Activated CD4-positive, alpha-beta memory T cell treated with anti-CD3 and anti-CD28 coated beads for 36 hours (primary cell): ENCODE measurements at regions of chr6 and their contacts with region 1.

Region 1: DNA sequence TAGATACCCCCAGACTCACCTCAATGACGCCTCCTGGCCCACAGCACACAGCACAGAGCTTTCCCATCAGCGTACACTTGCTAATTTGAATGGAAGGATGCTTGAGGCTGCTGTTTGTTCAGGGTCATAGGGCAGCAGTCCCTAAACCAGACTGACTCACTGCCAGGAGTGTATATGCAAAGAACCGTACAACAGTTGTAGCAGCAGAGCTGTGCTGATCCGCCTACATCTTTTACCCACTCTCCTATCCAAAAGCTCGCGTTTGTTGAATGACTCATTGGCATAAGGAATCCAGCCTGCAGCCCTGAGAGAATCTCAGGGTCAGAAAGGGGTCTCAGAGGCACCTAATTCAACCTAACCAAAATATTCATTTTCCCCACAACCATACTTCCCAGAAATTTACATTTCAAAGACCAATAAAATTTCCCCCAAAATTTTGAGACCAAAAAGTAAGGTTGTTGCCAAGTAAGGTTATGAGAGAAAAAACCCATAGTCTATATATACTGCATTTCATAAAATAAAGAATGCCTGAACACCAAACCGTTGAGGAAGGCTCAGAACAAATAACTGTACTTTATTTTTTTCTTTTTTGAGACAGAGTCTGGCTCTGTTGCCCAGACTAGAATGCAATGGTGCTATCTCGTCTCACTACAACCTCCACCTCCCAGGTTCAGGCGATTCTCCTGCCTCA is 35.3 kb upstream of the CCND3 start:
- DNase-seq: peak; percentile 64
- H3K4me3 Mint-ChIP-seq: peak overlapping the region; percentile 57
- H3K27ac Mint-ChIP-seq: peak overlapping the region; percentile 94
- H3K4me1 Mint-ChIP-seq: peaks cover 67% of the 10 kb centered on the region
- H3K27me3 Mint-ChIP-seq: no peaks in the 10 kb centered on the region

Region 2: GRCh38 chr6:41638002-41638934 is 338.7 kb before region 1 on chr6 and contains the start of gene MDFI:
- CTCF ChIA-PET with region 1: no interaction called
- POLR2A ChIA-PET with region 1: no interaction called
- intact Hi-C with region 1: no loop called
- DNase-seq: no peak
- H3K4me3 Mint-ChIP-seq: peak within 1 kb of the TSS; percentile 54
- H3K27ac Mint-ChIP-seq: no peak within 1 kb of the TSS
- H3K4me1 Mint-ChIP-seq: peaks cover 5% of the 10 kb centered on the region
- H3K27me3 Mint-ChIP-seq: peaks cover 48% of the 10 kb centered on the region
- total RNA-seq, gene MDFI: not detected

Region 3: GRCh38 chr6:41901882-41902519 is 74.9 kb before region 1 on chr6:
- CTCF ChIA-PET with region 1: no interaction called
- POLR2A ChIA-PET with region 1: no interaction called
- intact Hi-C with region 1: no loop called
- DNase-seq: peak; percentile 75
- H3K4me3 Mint-ChIP-seq: no peak overlapping the region
- H3K27ac Mint-ChIP-seq: no peak overlapping the region
- H3K4me1 Mint-ChIP-seq: peaks cover 12% of the 10 kb centered on the region
- H3K27me3 Mint-ChIP-seq: no peaks in the 10 kb centered on the region

Region 4: DNA sequence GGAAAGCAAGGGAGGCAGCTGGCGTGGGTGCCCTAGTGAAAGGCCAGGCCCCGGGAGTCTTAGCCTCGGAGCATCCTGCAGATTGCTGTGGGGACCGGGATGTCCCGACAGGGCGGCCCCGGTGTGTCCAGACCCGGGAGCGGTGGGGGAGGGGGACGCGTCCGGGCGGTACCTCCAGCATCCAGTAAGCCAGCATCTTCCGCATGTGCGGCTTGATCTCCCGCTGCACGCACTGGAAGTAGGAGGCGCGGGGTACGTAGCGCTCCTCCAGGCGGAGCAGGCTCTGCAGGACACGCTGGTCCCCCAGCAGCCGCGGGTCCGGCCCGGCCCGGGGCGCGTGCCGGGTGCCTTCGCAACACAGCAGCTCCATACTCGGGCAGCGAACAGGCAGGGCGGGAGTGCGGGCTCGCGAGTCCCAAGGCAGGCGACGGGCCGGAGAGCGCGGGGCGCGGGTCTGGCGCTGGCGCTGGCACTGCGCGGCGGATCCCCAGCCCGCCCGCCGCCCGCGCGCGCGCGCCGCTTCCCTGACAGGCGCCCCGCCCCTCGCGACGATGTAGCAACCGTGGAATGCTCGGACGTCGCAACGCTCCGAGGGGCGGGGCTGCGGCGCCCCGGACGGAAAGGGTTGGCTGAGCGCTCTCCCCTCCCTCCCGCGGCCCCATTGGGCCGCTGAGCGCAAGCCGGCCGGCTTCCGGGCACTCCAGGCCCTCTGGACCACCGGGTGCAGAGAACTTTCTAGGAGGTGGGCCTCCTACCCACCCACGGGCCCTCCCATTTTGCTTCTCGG is 35.5 kb before region 1 on chr6 and contains the start of gene CCND3:
- CTCF ChIA-PET with region 1: interaction called, 4 read pairs
- POLR2A ChIA-PET with region 1: interaction called, 7 read pairs
- intact Hi-C with region 1: loop called (anchors 5 kb)
- DNase-seq: peak; percentile 94
- H3K4me3 Mint-ChIP-seq: peak within 1 kb of the TSS; percentile 99
- H3K27ac Mint-ChIP-seq: peak within 1 kb of the TSS; percentile 94
- H3K4me1 Mint-ChIP-seq: peaks cover 50% of the 10 kb centered on the region
- H3K27me3 Mint-ChIP-seq: no peaks in the 10 kb centered on the region
- total RNA-seq, gene CCND3: 570 to 573 TPM

Region 5: DNA sequence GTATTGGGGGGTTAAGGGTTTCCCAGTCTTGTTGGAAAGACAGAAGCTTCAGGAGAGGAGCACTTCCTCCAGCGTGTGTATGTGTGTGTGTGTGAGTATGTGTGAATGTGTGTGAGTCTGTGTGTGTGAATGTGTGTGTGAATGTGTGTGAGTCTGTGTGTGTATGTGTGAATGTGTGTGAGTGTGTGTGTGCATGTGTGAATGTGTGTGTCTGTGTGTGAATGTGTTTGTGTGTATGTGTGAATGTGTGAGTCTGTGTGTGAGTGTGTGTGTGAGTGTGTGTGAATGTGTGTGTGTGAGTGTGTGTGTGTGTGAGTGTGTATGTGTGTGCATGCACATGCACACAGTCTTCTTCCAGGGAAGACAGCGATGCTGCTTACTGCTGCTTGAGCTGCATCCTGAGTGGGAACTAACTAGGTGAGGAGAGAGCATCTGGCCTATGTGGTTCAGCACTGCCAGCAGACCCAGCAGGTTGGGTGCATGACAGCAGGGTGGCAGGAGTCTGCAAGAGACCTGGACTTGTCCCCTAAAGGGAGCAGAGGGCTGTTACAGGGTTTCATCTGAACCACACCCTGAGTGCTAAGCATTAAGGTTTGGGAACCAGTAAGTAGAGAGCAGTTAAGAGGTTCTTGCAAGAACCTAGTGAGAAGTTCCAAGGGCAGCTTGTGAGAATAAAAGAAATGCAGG is 12.6 kb before region 1 on chr6:
- CTCF ChIA-PET with region 1: interaction called, 3 read pairs
- POLR2A ChIA-PET with region 1: interaction called, 11 read pairs
- intact Hi-C with region 1: no loop called
- DNase-seq: no peak
- H3K4me3 Mint-ChIP-seq: no peak overlapping the region
- H3K27ac Mint-ChIP-seq: peak overlapping the region; percentile 89
- H3K4me1 Mint-ChIP-seq: peaks cover 81% of the 10 kb centered on the region
- H3K27me3 Mint-ChIP-seq: no peaks in the 10 kb centered on the region

Region 6: GRCh38 chr6:42028234-42029061 is 51.5 kb after region 1 on chr6:
- CTCF ChIA-PET with region 1: no interaction called
- POLR2A ChIA-PET with region 1: interaction called, 6 read pairs
- intact Hi-C with region 1: loop called (anchors 2 kb)
- DNase-seq: peak; percentile 58
- H3K4me3 Mint-ChIP-seq: peak overlapping the region; percentile 77
- H3K27ac Mint-ChIP-seq: peak overlapping the region; percentile 97
- H3K4me1 Mint-ChIP-seq: peaks cover 82% of the 10 kb centered on the region
- H3K27me3 Mint-ChIP-seq: no peaks in the 10 kb centered on the region

Region 7: DNA sequence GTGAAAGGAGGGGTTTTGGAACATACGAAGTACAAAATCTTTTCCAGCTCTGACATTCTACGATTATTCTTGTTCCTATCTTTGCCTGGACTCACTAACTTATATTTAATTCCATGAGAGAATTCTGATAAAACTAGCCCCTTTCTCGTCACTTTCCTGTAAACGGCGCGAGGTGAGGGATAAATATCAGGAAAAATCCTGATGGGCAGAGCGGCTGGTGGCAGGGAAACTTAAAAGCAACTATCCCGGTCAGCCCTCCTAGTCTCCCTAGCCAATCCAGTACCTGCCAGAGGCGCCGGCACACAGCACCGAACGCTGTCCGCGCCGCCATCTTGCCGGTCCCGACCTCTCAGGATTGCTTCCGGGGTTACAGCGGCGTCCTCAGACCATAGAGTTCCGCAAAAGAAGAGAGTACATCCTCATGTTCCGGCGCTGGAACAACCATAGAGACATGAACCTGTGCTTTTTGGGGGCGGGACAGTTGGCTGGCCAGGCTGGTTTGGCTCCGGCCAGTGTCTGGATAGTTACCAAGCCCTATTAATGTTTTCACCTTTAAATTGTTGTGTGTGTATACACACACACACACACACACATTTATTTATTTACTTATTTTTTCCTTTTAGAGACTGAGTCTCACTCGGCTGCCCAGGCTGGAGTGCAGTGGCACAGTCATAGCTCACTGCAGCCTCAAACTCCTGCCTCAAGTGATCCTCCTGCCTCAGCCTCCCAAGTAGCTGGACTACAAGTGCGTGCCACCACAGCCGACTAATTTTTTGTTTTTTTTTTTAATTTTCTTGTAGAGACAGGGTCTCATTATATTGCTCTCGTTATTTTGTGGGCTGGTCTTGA is 240.8 kb after region 1 on chr6 and contains the start of gene MRPS10:
- CTCF ChIA-PET with region 1: no interaction called
- POLR2A ChIA-PET with region 1: no interaction called
- intact Hi-C with region 1: no loop called
- DNase-seq: peak; percentile 95
- H3K4me3 Mint-ChIP-seq: peak within 1 kb of the TSS; percentile 99
- H3K27ac Mint-ChIP-seq: peak within 1 kb of the TSS; percentile 94
- H3K4me1 Mint-ChIP-seq: peaks cover 39% of the 10 kb centered on the region
- H3K27me3 Mint-ChIP-seq: no peaks in the 10 kb centered on the region
- total RNA-seq, gene MRPS10: 38.6 to 40.3 TPM